CD4-positive, alpha-beta memory T cell (primary cell): ENCODE measurements at regions of chr3 and their contacts with region 1.

Region 1: GRCh38 chr3:142723968-142724681 is at the start of gene TRPC1:
- DNase-seq: peak; percentile 80 to 87 (median 84)
- H3K4me3 ChIP-seq: peak within 1 kb of the TSS; percentile 58 to 65
- H3K4me3 Mint-ChIP-seq: peak within 1 kb of the TSS; percentile 88 to 91 (median 90)
- H3K27ac ChIP-seq: peak within 1 kb of the TSS; percentile 55
- H3K27ac Mint-ChIP-seq: peak within 1 kb of the TSS; percentile 74 to 96 (median 95)
- H3K4me1 ChIP-seq: peaks cover 12% of the 10 kb centered on the region
- H3K4me1 Mint-ChIP-seq: peaks cover 8 to 15% (median 15%) of the 10 kb centered on the region in 4 donors
- H3K27me3 ChIP-seq: no peaks in the 10 kb centered on the region
- H3K27me3 Mint-ChIP-seq: peaks cover 8 to 15% of the 10 kb centered on the region in 2 donors
- total RNA-seq, gene TRPC1: 6.0 to 8.8 TPM

Region 2: DNA sequence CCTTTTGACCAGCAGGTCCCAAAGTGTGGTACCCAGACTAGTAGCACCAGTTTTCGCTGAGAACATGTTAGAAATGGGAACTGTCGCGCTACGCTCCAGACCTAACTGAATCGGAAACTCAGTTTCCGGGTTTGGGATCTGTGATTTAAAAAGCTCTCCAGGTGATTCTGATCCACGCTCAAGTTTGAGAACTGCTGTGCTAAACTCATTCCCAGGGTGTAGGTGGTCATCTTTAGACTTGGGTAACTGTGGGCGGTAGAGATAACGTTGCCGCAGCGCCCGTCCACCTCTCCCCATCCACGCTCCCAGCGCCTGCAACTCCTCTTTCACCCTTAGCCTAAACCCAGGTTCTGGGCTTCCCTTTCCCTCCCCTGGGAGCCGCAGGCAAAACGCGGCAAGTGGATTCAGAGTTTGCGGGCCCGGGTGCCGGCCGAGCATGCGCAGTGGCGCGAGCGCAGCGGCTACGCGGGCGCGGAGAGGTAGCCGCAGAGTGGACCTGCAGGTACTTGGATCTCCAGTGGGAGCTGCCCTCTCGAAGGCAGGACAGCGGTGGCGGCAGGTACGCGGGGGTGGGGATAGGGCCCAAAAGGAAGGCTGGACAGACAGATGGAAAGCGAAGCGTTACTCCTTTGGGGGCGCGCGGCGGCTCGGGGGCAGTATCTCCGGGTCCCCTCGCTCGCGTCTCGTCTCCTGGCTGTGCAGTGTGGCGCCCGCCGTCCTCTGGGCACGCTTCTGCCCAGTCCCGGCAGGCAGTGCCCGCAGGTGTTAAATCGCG is 128.0 kb before region 1 on chr3 and contains the start of gene PLS1:
- CTCF ChIA-PET with region 1: no interaction called
- POLR2A ChIA-PET with region 1: interaction called, 8 read pairs
- intact Hi-C with region 1: loop called (anchors 1 kb)
- DNase-seq: peak; percentile 82 to 89 (median 85)
- H3K4me3 ChIP-seq: peak within 1 kb of the TSS; percentile 91 to 93
- H3K4me3 Mint-ChIP-seq: peak within 1 kb of the TSS; percentile 97 to 99 (median 98)
- H3K27ac ChIP-seq: peak within 1 kb of the TSS; percentile 36
- H3K27ac Mint-ChIP-seq: peak within 1 kb of the TSS; percentile 65 to 97 (median 96)
- H3K4me1 ChIP-seq: peaks cover 15% of the 10 kb centered on the region
- H3K4me1 Mint-ChIP-seq: peaks cover 7 to 22% (median 15%) of the 10 kb centered on the region in 4 donors
- H3K27me3 ChIP-seq: no peaks in the 10 kb centered on the region
- H3K27me3 Mint-ChIP-seq: peaks cover 1 to 2% of the 10 kb centered on the region in 2 donors
- total RNA-seq, gene PLS1: 2.7 to 3.1 TPM